ENCODE measurements at regions of chr22 and their contacts with region 1.

Region 1: GRCh38 chr22:50456466-50457234 is 18.2 kb downstream of the SBF1 start:
- DNase-seq: no peak
- H3K4me3 ChIP-seq: no peak overlapping the region
- H3K27ac ChIP-seq: no peak overlapping the region
- H3K4me1 ChIP-seq: no peaks in the 10 kb centered on the region
- H3K27me3 ChIP-seq: no peaks in the 10 kb centered on the region
- CTCF ChIP-seq: peak in 1 of 2 donors; percentile 25

Region 2: GRCh38 chr22:50376085-50376651 is 80.5 kb before region 1 on chr22:
- CTCF ChIA-PET with region 1: no interaction called
- dilution Hi-C with region 1: loop called (anchors 5 kb)
- in situ Hi-C with region 1: no loop called
- intact Hi-C with region 1: no loop called
- DNase-seq: no peak
- H3K4me3 ChIP-seq: no peak overlapping the region
- H3K27ac ChIP-seq: no peak overlapping the region
- H3K4me1 ChIP-seq: no peaks in the 10 kb centered on the region
- H3K27me3 ChIP-seq: no peaks in the 10 kb centered on the region
- CTCF ChIP-seq: no peak

Region 3: GRCh38 chr22:50474668-50475492 is 18.2 kb after region 1 on chr22 and contains the start of gene SBF1:
- CTCF ChIA-PET with region 1: no interaction called
- dilution Hi-C with region 1: no loop called
- in situ Hi-C with region 1: no loop called
- intact Hi-C with region 1: no loop called
- DNase-seq: peak; percentile 82
- H3K4me3 ChIP-seq: peak within 1 kb of the TSS; percentile 60 to 79 (median 66)
- H3K27ac ChIP-seq: peak within 1 kb of the TSS; percentile 4
- H3K4me1 ChIP-seq: peaks cover 54% of the 10 kb centered on the region
- H3K27me3 ChIP-seq: no peaks in the 10 kb centered on the region
- CTCF ChIP-seq: no peak
- total RNA-seq, gene SBF1: 79.0 to 84.5 TPM

Measured in mammary epithelial cell (primary cell).